ENCODE measurements at regions of chr9 and their contacts with region 1.

Region 1: GRCh38 chr9:111030492-111030891 is 7.8 kb downstream of the LPAR1 start:
- DNase-seq: no peak
- ATAC-seq: no peak
- H3K4me3 ChIP-seq: no peak overlapping the region
- H3K27ac ChIP-seq: no peak overlapping the region
- H3K4me1 ChIP-seq: peaks cover 20% of the 10 kb centered on the region
- H3K27me3 ChIP-seq: no peaks in the 10 kb centered on the region
- CTCF ChIP-seq: no peak
- POLR2A ChIP-seq: no peak
- RAD21 ChIP-seq: no peak

Region 2: GRCh38 chr9:110874963-110875674 is 155.4 kb before region 1 on chr9:
- CTCF ChIA-PET with region 1: no interaction called
- POLR2A ChIA-PET with region 1: interaction called, 20 read pairs
- dilution Hi-C with region 1: no loop called
- in situ Hi-C with region 1: no loop called
- intact Hi-C with region 1: loop called (anchors 10 kb)
- DNase-seq: no peak
- ATAC-seq: no peak
- H3K4me3 ChIP-seq: no peak overlapping the region
- H3K27ac ChIP-seq: peak overlapping the region; percentile 5; the same call in 1 of the 2 replicates
- H3K4me1 ChIP-seq: peaks cover 10% of the 10 kb centered on the region
- H3K27me3 ChIP-seq: no peaks in the 10 kb centered on the region
- CTCF ChIP-seq: no peak
- POLR2A ChIP-seq: no peak
- RAD21 ChIP-seq: no peak

Measured in IMR-90 (cell line).